Mammary epithelial cell (primary cell): ENCODE measurements at regions of chr17 and their contacts with region 1.

Region 1: DNA sequence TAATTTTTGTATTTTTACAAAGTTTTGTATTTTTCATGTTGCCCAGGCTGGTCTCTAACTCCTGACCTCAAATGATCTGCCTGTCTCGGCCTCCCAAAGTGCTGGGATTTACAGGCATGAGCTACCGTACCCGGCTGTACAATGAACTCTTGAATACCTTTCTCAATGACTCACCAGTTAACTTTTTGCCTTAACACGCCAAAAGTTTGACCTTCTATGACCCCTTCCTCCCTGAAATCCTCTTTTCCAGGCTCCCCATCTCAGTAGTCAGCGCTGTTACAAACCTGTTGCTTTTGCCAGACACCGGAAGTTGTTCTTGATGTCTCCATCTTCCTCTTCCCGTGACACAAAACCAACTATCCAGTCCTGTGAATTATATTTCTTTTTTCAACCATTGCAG is 158.1 kb upstream of the ASIC2 start:
- DNase-seq: no peak
- H3K4me3 ChIP-seq: no peak overlapping the region
- H3K27ac ChIP-seq: no peak overlapping the region
- H3K4me1 ChIP-seq: no peaks in the 10 kb centered on the region
- H3K27me3 ChIP-seq: no peaks in the 10 kb centered on the region
- CTCF ChIP-seq: no peak

Region 2: DNA sequence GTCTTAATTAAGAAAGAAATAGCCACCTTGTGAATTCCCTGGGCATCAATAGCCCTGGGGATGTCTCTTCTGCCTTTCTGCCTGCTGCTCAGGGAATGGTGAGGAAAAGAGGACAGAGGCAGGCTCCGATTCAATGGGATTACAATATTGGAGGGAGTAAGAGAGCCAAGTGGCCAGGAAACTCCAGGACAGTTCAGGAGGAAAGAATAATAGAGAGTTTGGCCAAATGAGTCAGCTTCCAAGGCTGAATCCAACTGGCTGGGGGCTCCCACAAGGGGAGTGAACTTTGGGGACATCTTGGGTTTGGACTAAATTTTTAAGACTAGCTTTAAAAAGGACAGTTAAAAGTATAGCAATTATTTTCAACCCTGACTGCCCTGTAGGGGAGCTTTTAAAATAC is 77.6 kb after region 1 on chr17:
- CTCF ChIA-PET with region 1: no interaction called
- dilution Hi-C with region 1: loop called (anchors 5 kb)
- in situ Hi-C with region 1: no loop called
- intact Hi-C with region 1: no loop called
- DNase-seq: no peak
- H3K4me3 ChIP-seq: no peak overlapping the region
- H3K27ac ChIP-seq: no peak overlapping the region
- H3K4me1 ChIP-seq: no peaks in the 10 kb centered on the region
- H3K27me3 ChIP-seq: no peaks in the 10 kb centered on the region
- CTCF ChIP-seq: no peak